GM12878 (cell line): ENCODE measurements at regions of chr6 and their contacts with region 1.

Region 1: GRCh38 chr6:142746524-142746923 is 198.5 kb downstream of the HIVEP2 start:
- DNase-seq: no peak
- ATAC-seq: peak; percentile 92
- H3K4me3 ChIP-seq: no peak overlapping the region
- H3K27ac ChIP-seq: no peak overlapping the region
- H3K4me1 ChIP-seq: no peaks in the 10 kb centered on the region
- H3K27me3 ChIP-seq: no peaks in the 10 kb centered on the region
- CTCF ChIP-seq: peak; percentile 46 to 60 (median 56); a peak in 5 of 6 replicates
- EP300 ChIP-seq: no peak
- POLR2A ChIP-seq: no peak
- RAD21 ChIP-seq: peak; percentile 67

Region 2: GRCh38 chr6:142138876-142139275 is 607.6 kb before region 1 on chr6:
- CTCF ChIA-PET with region 1: no interaction called
- POLR2A ChIA-PET with region 1: no interaction called
- RAD21 ChIA-PET with region 1: no interaction called
- SMC1A ChIA-PET with region 1: no interaction called
- in situ Hi-C with region 1: no loop called
- intact Hi-C with region 1: no loop called
- DNase-seq: no peak
- ATAC-seq: no peak
- H3K4me3 ChIP-seq: no peak overlapping the region
- H3K27ac ChIP-seq: no peak overlapping the region
- H3K4me1 ChIP-seq: no peaks in the 10 kb centered on the region
- H3K27me3 ChIP-seq: no peaks in the 10 kb centered on the region
- CTCF ChIP-seq: no peak
- EP300 ChIP-seq: no peak
- POLR2A ChIP-seq: no peak
- RAD21 ChIP-seq: no peak

Region 3: DNA sequence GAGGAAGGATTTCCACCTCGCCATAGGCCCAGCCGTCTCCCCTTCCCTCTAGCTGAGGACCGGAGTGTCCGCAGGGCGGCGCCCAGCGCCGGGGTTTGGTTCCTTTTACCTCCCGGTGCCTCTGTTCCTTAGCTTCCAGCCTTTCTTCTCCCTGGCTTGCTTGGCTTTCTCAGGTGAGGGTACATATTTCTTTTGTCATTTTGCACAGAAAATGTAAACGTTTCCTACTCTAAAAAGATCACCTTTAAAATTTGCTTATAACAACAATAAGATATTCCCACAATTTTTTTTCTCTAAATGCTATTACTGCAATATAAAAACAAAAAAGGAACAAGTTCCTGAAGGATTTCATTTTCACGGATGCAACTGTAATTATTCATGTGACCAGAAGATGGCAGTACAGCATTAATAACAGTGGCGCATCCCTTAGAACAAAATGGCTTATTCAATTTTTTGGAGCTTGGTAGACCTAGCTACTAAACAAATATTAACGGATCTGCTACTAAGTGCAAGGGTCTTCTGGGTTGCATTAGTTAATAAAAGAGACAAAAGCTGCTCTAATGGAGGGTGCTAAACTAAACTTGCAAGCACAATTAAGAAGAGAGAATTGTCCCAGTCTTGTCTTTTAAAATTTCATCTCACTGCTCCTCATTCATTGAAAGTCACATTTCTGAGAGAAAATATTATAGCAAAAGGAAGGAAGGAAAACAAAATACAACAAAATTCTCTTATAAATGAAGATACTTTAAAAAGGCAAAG is 271.8 kb before region 1 on chr6:
- CTCF ChIA-PET with region 1: interaction called, 4 read pairs
- POLR2A ChIA-PET with region 1: no interaction called
- RAD21 ChIA-PET with region 1: no interaction called
- SMC1A ChIA-PET with region 1: no interaction called
- in situ Hi-C with region 1: no loop called
- intact Hi-C with region 1: loop called (anchors 10 kb)
- DNase-seq: no peak
- ATAC-seq: peak; percentile 69
- H3K4me3 ChIP-seq: no peak overlapping the region
- H3K27ac ChIP-seq: no peak overlapping the region
- H3K4me1 ChIP-seq: no peaks in the 10 kb centered on the region
- H3K27me3 ChIP-seq: no peaks in the 10 kb centered on the region; a peak in 1 of 4 replicates
- CTCF ChIP-seq: peak; percentile 53 to 79 (median 64); a peak in 5 of 6 replicates
- EP300 ChIP-seq: no peak
- POLR2A ChIP-seq: no peak
- RAD21 ChIP-seq: peak; percentile 89

Region 4: DNA sequence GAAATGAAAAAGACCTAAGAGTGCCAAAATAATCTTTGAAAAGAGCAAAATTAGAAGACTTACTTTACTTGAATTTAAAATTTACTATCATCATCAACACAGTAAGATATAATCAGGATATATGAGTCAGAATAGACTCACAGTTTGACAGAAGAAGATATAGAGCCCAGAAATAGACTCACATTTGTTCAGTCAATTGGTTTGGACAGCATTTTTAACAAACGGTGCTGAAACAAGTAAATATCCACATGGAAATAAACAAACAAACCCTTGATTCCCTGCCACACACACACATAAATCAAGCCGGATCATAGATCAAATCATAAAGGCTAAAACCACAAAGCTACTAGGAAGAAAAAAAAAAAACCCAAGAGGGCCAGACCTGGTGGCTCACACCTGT is 153.6 kb before region 1 on chr6:
- CTCF ChIA-PET with region 1: no interaction called
- POLR2A ChIA-PET with region 1: no interaction called
- RAD21 ChIA-PET with region 1: no interaction called
- SMC1A ChIA-PET with region 1: no interaction called
- in situ Hi-C with region 1: no loop called
- intact Hi-C with region 1: no loop called
- DNase-seq: no peak
- ATAC-seq: no peak
- H3K4me3 ChIP-seq: no peak overlapping the region
- H3K27ac ChIP-seq: no peak overlapping the region
- H3K4me1 ChIP-seq: no peaks in the 10 kb centered on the region
- H3K27me3 ChIP-seq: no peaks in the 10 kb centered on the region
- CTCF ChIP-seq: no peak
- EP300 ChIP-seq: no peak
- POLR2A ChIP-seq: no peak
- RAD21 ChIP-seq: no peak

Region 5: GRCh38 chr6:142702501-142703460 is 43.7 kb before region 1 on chr6:
- CTCF ChIA-PET with region 1: interaction called, 6 read pairs
- POLR2A ChIA-PET with region 1: no interaction called
- RAD21 ChIA-PET with region 1: interaction called, 3 read pairs
- SMC1A ChIA-PET with region 1: interaction called, 31 read pairs
- in situ Hi-C with region 1: no loop called
- intact Hi-C with region 1: no loop called
- DNase-seq: no peak
- ATAC-seq: peak; percentile 53
- H3K4me3 ChIP-seq: no peak overlapping the region
- H3K27ac ChIP-seq: no peak overlapping the region; the same call in 1 of the 2 replicates
- H3K4me1 ChIP-seq: peaks cover 14% of the 10 kb centered on the region
- H3K27me3 ChIP-seq: no peaks in the 10 kb centered on the region
- CTCF ChIP-seq: no peak
- EP300 ChIP-seq: no peak
- POLR2A ChIP-seq: no peak
- RAD21 ChIP-seq: no peak

Region 6: GRCh38 chr6:142764311-142764710 is 17.8 kb after region 1 on chr6:
- CTCF ChIA-PET with region 1: interaction called, 4 read pairs
- POLR2A ChIA-PET with region 1: interaction called, 7 read pairs
- RAD21 ChIA-PET with region 1: no interaction called
- SMC1A ChIA-PET with region 1: interaction called, 11 read pairs
- in situ Hi-C with region 1: no loop called
- intact Hi-C with region 1: no loop called
- DNase-seq: no peak
- ATAC-seq: no peak
- H3K4me3 ChIP-seq: no peak overlapping the region
- H3K27ac ChIP-seq: no peak overlapping the region
- H3K4me1 ChIP-seq: no peaks in the 10 kb centered on the region
- H3K27me3 ChIP-seq: no peaks in the 10 kb centered on the region
- CTCF ChIP-seq: no peak
- EP300 ChIP-seq: no peak
- POLR2A ChIP-seq: no peak
- RAD21 ChIP-seq: no peak

Region 7: DNA sequence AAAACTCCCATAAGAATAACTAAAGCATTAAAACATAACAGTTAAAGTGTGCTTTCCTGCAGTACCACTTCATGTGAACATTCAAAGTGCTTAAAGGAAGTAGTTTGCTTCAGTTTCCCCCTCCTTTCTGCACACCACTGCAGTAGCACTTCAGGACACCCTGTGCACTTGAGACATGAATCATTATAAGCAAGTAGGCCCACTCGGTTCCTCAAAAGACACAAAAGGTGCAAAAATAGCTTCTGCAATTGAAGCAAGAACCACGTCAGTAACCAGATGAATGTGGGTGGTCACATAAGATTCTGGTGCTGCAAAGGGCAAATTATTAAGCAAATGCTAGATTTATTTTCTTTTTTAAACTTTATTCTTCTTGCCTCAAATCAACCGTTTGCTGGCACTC is 37.8 kb after region 1 on chr6:
- CTCF ChIA-PET with region 1: interaction called, 9 read pairs
- POLR2A ChIA-PET with region 1: no interaction called
- RAD21 ChIA-PET with region 1: interaction called, 5 read pairs
- SMC1A ChIA-PET with region 1: interaction called, 15 read pairs
- in situ Hi-C with region 1: no loop called
- intact Hi-C with region 1: no loop called
- DNase-seq: peak; percentile 86
- ATAC-seq: peak; percentile 99
- H3K4me3 ChIP-seq: no peak overlapping the region
- H3K27ac ChIP-seq: peak overlapping the region; percentile 76
- H3K4me1 ChIP-seq: peaks cover 11% of the 10 kb centered on the region; the same call in 1 of the 2 replicates
- H3K27me3 ChIP-seq: no peaks in the 10 kb centered on the region
- CTCF ChIP-seq: no peak
- EP300 ChIP-seq: peak; percentile 86 to 97
- POLR2A ChIP-seq: no peak
- RAD21 ChIP-seq: peak; percentile 43; the same call in 1 of the 2 replicates

Region 8: GRCh38 chr6:142827369-142827768 is 80.8 kb after region 1 on chr6:
- CTCF ChIA-PET with region 1: interaction called, 22 read pairs
- POLR2A ChIA-PET with region 1: no interaction called
- RAD21 ChIA-PET with region 1: interaction called, 3 read pairs
- SMC1A ChIA-PET with region 1: interaction called, 13 read pairs
- in situ Hi-C with region 1: no loop called
- intact Hi-C with region 1: no loop called
- DNase-seq: no peak
- ATAC-seq: no peak
- H3K4me3 ChIP-seq: no peak overlapping the region
- H3K27ac ChIP-seq: no peak overlapping the region
- H3K4me1 ChIP-seq: peaks cover 10% of the 10 kb centered on the region
- H3K27me3 ChIP-seq: no peaks in the 10 kb centered on the region
- CTCF ChIP-seq: no peak
- EP300 ChIP-seq: no peak
- POLR2A ChIP-seq: no peak
- RAD21 ChIP-seq: no peak

Region 9: GRCh38 chr6:143026696-143027449 is 280.3 kb after region 1 on chr6:
- CTCF ChIA-PET with region 1: interaction called, 29 read pairs
- POLR2A ChIA-PET with region 1: no interaction called
- RAD21 ChIA-PET with region 1: interaction called, 19 read pairs
- SMC1A ChIA-PET with region 1: interaction called, 27 read pairs
- in situ Hi-C with region 1: no loop called
- intact Hi-C with region 1: loop called (anchors 1 kb)
- DNase-seq: no peak
- ATAC-seq: peak; percentile 76
- H3K4me3 ChIP-seq: no peak overlapping the region
- H3K27ac ChIP-seq: no peak overlapping the region
- H3K4me1 ChIP-seq: no peaks in the 10 kb centered on the region
- H3K27me3 ChIP-seq: no peaks in the 10 kb centered on the region
- CTCF ChIP-seq: peak; percentile 50 to 54 (median 50); a peak in 5 of 6 replicates
- EP300 ChIP-seq: no peak
- POLR2A ChIP-seq: no peak
- RAD21 ChIP-seq: peak; percentile 60